Gastrocnemius medialis (tissue), 4 donors: ENCODE measurements at regions of chr9 and their contacts with region 1.

Region 1: DNA sequence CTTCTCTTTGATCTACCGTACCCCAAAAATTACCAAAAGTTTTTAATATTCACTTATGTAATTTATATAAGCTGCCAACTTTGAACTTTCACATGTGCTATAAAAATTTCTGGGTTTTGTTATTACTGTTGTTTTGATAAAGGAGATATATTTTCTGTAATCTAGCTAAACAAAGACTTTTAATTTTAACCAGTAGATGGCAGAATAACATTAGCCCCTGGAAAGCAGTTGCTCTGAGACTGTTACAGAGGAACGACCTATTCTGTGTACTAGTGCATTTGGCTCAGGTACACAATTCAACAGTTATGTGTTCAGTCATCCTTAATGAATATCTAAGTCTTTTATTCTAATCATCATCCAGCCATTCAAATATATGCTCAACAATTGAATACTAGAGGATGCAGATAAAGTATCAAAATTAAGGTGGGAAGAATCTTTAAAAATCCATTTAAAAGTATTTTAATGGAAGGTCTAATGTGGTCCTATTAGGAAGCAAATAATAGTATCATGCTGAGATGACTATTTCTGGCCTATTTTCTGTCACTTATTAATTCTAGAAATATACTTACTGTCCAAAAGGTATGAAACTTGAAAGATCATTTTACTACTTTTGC is 8.6 kb downstream of the KLHL9 start:
- DNase-seq: no peak
- ATAC-seq: peak; percentile 77 to 93
- H3K4me3 ChIP-seq: no peak overlapping the region
- H3K27ac ChIP-seq: no peak overlapping the region
- H3K4me1 ChIP-seq: peaks cover 20 to 30% of the 10 kb centered on the region in 2 donors
- H3K27me3 ChIP-seq: no peaks in the 10 kb centered on the region
- CTCF ChIP-seq: peak in 4 of 5 experiments; percentile 54 to 81 (median 72)
- POLR2A ChIP-seq: no peak

Region 2: GRCh38 chr9:21395778-21396717 is 69.4 kb after region 1 on chr9:
- in situ Hi-C with region 1: loop called (anchors 5 to 10 kb)
- intact Hi-C with region 1: loop called (anchors 1 kb)
- DNase-seq: no peak
- ATAC-seq: peak; percentile 39 to 70
- H3K4me3 ChIP-seq: peak overlapping the region; percentile 53 to 86 (median 62)
- H3K27ac ChIP-seq: no peak overlapping the region
- H3K4me1 ChIP-seq: no peaks in the 10 kb centered on the region
- H3K27me3 ChIP-seq: peaks cover 4 to 7% (median 5%) of the 10 kb centered on the region in 3 donors
- CTCF ChIP-seq: peak; percentile 54 to 82 (median 69)
- POLR2A ChIP-seq: no peak

Region 3: DNA sequence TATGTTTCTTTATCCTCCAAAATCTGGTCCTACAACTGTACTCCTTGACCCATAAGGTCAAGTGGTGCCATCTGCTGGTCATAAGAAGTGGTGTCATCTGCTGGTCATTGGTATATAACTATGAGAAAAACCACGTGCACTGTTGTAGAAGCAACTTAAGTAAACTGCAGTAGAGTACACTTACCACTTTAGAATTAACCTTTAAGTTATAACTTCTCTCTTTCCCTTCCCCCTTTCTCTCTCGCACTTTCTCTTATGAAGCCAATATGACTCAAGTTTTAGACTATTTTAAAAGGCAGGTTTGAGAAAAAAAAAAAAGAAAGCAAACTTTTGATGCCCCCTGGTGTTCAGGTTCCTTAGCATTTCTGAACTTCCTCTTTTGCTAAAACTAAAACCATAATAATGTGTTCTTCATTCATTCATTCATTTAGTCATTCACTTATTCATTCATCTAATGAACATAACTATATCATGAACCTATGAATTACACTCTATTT is 463.0 kb after region 1 on chr9:
- in situ Hi-C with region 1: loop called in 2 of 4 experiments (anchors 10 kb)
- intact Hi-C with region 1: loop called (anchors 5 kb)
- DNase-seq: peak; percentile 24 to 48
- ATAC-seq: peak; percentile 97 to 98
- H3K4me3 ChIP-seq: peak overlapping the region in 1 of 4 donors; percentile 22
- H3K27ac ChIP-seq: no peak overlapping the region
- H3K4me1 ChIP-seq: no peaks in the 10 kb centered on the region
- H3K27me3 ChIP-seq: peaks cover 0 to 2% (median 0%) of the 10 kb centered on the region in 3 donors
- CTCF ChIP-seq: peak; percentile 57 to 82 (median 63)
- POLR2A ChIP-seq: no peak

Region 4: DNA sequence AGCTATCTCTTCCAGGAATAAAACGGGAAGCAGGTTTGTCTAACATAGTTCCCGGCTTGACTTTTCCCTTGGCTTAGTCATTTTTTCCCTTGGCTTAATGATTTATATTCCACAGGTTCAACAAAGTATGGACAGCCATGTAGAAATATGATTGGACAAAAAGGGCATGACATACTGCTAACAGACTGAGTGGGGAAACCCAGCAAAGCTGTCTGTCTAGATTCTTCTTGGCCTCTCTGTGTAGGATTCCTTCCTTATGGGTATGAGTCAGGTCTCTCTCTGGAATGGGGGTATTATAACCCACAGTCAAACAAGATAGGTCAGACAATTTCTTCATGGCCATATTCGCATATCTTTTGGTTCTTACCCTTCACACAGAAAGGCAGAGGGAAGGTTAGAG is 470.1 kb after region 1 on chr9:
- in situ Hi-C with region 1: loop called in 3 of 4 experiments (anchors 5 to 10 kb)
- intact Hi-C with region 1: no loop called
- DNase-seq: no peak
- ATAC-seq: no peak
- H3K4me3 ChIP-seq: no peak overlapping the region
- H3K27ac ChIP-seq: no peak overlapping the region
- H3K4me1 ChIP-seq: peaks cover 0 to 8% of the 10 kb centered on the region in 2 donors
- H3K27me3 ChIP-seq: no peaks in the 10 kb centered on the region
- CTCF ChIP-seq: no peak
- POLR2A ChIP-seq: no peak